ENCODE measurements at regions of chr13 and their contacts with region 1.

Region 1: GRCh38 chr13:113724780-113725315 is 34.2 kb upstream of the TMEM255B start:
- DNase-seq: no peak
- H3K4me3 ChIP-seq: peak overlapping the region; percentile 46
- CTCF ChIP-seq: peak; percentile 90

Region 2: GRCh38 chr13:113666951-113667701 is 57.7 kb before region 1 on chr13 and contains the start of gene GRK1:
- CTCF ChIA-PET with region 1: interaction called, 16 read pairs
- POLR2A ChIA-PET with region 1: no interaction called
- DNase-seq: no peak
- H3K4me3 ChIP-seq: no peak within 1 kb of the TSS
- CTCF ChIP-seq: no peak

Region 3: DNA sequence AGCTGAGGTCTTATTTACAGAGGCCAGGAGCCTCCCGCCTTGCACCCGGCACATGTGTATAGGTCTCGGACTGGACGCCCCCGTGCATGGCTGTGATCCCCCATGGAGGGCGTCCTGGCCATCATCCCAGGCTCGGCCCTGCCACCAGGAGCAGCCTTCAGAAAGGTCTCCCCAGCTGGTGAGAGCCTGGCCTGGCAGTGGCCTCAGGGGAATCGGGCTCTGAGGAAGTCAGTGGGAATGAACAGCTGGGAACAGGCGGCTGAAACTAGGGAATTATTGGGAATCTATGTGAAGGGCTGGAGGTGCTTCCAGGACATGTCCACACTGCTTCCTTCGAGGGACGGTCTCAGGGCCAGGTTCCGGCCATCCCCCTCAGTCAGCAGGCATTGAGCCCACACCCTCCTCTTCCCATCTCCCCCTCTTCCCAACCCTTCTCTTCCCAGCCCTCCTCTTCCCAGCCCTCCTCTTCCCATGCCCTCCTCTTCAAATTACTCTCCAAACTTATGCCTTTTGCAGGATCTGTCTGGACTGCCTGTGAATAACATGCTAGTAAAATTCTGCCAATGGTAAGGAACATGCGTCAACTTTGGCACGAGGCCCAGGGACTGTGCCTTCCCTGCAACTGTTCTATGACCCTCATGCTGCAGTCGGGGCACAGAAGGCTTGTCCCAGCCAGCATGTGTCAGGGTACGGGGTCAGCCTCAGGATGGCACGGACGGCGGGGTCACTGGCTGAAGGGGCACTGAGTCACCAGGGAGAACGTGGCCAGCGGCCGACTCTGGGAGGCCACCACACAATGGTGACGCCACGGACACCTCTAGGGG is 273.2 kb after region 1 on chr13:
- CTCF ChIA-PET with region 1: no interaction called
- POLR2A ChIA-PET with region 1: no interaction called
- DNase-seq: no peak
- H3K4me3 ChIP-seq: no peak overlapping the region
- CTCF ChIP-seq: no peak